H1 (cell line): ENCODE measurements at regions of chr4 and their contacts with region 1.

Region 1: GRCh38 chr4:153750197-153750817 is 9.5 kb downstream of the RNF175 start:
- DNase-seq: peak in 1 of 2 experiments; percentile 80
- H3K4me3 ChIP-seq: no peak overlapping the region
- H3K27ac ChIP-seq: no peak overlapping the region
- H3K4me1 ChIP-seq: no peaks in the 10 kb centered on the region
- H3K27me3 ChIP-seq: no peaks in the 10 kb centered on the region
- CTCF ChIP-seq: peak in 2 of 3 experiments; percentile 81 to 83; a peak in 3 of 4 replicates
- EP300 ChIP-seq: no peak
- POLR2A ChIP-seq: no peak
- RAD21 ChIP-seq: peak; percentile 85 to 94

Region 2: GRCh38 chr4:153398713-153399112 is 351.6 kb before region 1 on chr4:
- CTCF ChIA-PET with region 1: no interaction called
- POLR2A ChIA-PET with region 1: no interaction called
- DNase-seq: no peak
- H3K4me3 ChIP-seq: no peak overlapping the region
- H3K27ac ChIP-seq: no peak overlapping the region
- H3K4me1 ChIP-seq: no peaks in the 10 kb centered on the region
- H3K27me3 ChIP-seq: no peaks in the 10 kb centered on the region
- CTCF ChIP-seq: no peak
- EP300 ChIP-seq: no peak
- POLR2A ChIP-seq: no peak
- RAD21 ChIP-seq: no peak

Region 3: DNA sequence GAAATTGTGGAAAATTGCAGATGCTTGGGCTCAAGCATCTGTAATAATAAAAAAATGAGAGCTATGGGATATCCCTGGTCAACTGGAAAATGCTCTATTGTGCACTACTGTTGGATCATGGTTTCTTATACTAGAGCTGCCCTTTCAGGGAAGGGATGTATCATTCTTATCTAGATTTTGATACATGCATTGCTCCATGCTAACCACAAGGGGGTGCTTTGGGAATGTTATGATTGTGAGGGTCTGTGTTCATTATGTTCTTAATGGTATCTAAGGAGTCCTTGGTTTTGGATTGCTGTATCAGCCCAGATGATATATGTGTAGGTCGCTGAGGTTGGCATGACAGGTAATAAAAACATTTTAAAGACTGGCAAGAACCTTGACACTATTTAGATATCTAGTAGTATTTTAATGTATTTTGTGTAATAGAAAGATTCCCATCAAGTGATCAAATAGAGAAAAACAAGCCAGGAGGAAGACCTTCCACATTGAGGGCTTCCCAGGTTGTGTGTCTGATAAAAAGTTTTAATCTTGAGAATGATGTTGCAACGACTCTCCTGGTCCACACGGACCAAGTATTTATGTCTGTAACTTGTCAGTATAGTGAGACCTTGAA is 115.5 kb before region 1 on chr4:
- CTCF ChIA-PET with region 1: interaction called, 42 read pairs
- POLR2A ChIA-PET with region 1: interaction called, 3 read pairs
- DNase-seq: no peak
- H3K4me3 ChIP-seq: no peak overlapping the region
- H3K27ac ChIP-seq: no peak overlapping the region
- H3K4me1 ChIP-seq: peaks cover 0 to under 1% (median 0%) of the 10 kb centered on the region in 4 experiments; a peak in 1 of 7 replicates
- H3K27me3 ChIP-seq: no peaks in the 10 kb centered on the region
- CTCF ChIP-seq: peak in 2 of 3 experiments; percentile 55 to 78; a peak in 3 of 4 replicates
- EP300 ChIP-seq: no peak
- POLR2A ChIP-seq: no peak
- RAD21 ChIP-seq: peak; percentile 63 to 64

Region 4: DNA sequence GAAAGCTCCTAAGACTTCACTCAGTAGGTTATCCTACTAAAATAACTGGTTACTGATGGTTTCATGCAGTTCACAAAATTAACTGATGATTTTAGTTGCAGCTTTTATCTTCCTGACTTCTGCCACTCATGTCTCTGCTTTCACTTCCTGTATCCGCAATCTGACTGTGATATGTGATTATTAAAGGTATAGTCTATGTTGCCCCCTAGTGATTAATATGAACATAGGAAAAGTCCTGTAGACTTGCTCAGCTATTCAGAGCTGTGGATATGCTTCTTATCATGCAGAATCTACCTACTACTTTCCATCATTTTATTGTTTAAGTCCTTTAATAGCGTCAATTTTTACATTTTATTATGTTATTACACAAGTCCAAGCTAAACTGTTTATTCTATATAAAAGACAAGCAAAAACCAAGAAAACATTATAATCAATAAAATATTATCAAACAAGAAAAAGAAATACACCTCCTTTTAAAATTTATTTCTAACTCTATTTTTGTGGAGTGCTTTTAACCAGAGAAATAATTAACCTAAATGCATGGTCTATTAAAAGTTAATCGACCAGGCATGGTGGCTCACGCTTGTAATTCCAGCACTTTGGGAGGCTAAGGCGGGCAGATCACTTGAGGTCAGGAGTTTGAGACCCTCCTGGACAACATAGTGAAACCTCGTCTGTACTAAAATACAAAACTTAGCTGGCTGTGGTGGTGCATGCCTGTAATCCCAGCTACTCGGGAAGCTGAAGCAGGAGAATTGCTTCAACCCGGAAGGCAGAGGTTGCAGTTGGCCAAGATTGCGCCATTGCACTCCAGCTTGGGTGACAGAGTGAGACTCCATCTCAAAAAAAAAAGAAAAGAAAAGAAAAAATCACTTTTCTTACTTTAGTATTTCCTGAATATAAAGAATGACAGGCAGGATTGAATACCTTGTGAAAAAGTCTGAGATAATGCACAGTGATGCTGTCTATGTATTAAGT is 106.6 kb before region 1 on chr4:
- CTCF ChIA-PET with region 1: interaction called, 37 read pairs
- POLR2A ChIA-PET with region 1: no interaction called
- DNase-seq: no peak
- H3K4me3 ChIP-seq: no peak overlapping the region
- H3K27ac ChIP-seq: no peak overlapping the region
- H3K4me1 ChIP-seq: peaks cover 0 to 7% (median 0%) of the 10 kb centered on the region in 4 experiments; a peak in 3 of 7 replicates
- H3K27me3 ChIP-seq: no peaks in the 10 kb centered on the region
- CTCF ChIP-seq: peak in 1 of 3 experiments; percentile 23; a peak in 2 of 4 replicates
- EP300 ChIP-seq: no peak
- POLR2A ChIP-seq: no peak
- RAD21 ChIP-seq: peak; percentile 50 to 52

Region 5: DNA sequence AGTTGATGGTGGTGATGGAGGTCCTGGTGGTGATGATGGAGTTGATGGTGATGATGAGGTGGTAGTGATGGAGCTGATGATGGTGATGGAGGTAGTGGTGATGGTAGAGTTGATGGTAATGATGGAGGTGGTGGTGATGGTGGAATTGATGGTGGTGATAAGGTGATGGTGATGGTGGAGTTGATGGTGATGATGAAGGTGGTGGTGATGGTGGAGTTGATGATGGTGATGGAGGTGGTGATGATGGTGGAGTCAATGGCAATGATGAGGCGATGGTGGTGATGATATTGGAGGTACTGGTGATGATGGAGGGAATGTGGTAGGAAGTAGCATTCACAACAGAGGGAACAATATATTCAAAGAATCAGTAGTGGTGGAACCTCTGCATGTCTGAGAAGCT is 87.2 kb before region 1 on chr4:
- CTCF ChIA-PET with region 1: no interaction called
- POLR2A ChIA-PET with region 1: no interaction called
- DNase-seq: no peak
- H3K4me3 ChIP-seq: no peak overlapping the region
- H3K27ac ChIP-seq: no peak overlapping the region
- H3K4me1 ChIP-seq: no peaks in the 10 kb centered on the region
- H3K27me3 ChIP-seq: no peaks in the 10 kb centered on the region
- CTCF ChIP-seq: no peak
- EP300 ChIP-seq: no peak
- POLR2A ChIP-seq: no peak
- RAD21 ChIP-seq: no peak

Region 6: GRCh38 chr4:153725136-153725830 is 25.0 kb before region 1 on chr4:
- CTCF ChIA-PET with region 1: interaction called, 11 read pairs
- POLR2A ChIA-PET with region 1: no interaction called
- DNase-seq: no peak
- H3K4me3 ChIP-seq: no peak overlapping the region
- H3K27ac ChIP-seq: no peak overlapping the region
- H3K4me1 ChIP-seq: no peaks in the 10 kb centered on the region
- H3K27me3 ChIP-seq: no peaks in the 10 kb centered on the region
- CTCF ChIP-seq: no peak
- EP300 ChIP-seq: no peak
- POLR2A ChIP-seq: no peak
- RAD21 ChIP-seq: no peak

Region 7: GRCh38 chr4:153733751-153734448 is 16.4 kb before region 1 on chr4:
- CTCF ChIA-PET with region 1: interaction called, 12 read pairs
- POLR2A ChIA-PET with region 1: no interaction called
- DNase-seq: no peak
- H3K4me3 ChIP-seq: no peak overlapping the region
- H3K27ac ChIP-seq: no peak overlapping the region
- H3K4me1 ChIP-seq: no peaks in the 10 kb centered on the region
- H3K27me3 ChIP-seq: no peaks in the 10 kb centered on the region
- CTCF ChIP-seq: no peak
- EP300 ChIP-seq: no peak
- POLR2A ChIP-seq: no peak
- RAD21 ChIP-seq: no peak

Region 8: DNA sequence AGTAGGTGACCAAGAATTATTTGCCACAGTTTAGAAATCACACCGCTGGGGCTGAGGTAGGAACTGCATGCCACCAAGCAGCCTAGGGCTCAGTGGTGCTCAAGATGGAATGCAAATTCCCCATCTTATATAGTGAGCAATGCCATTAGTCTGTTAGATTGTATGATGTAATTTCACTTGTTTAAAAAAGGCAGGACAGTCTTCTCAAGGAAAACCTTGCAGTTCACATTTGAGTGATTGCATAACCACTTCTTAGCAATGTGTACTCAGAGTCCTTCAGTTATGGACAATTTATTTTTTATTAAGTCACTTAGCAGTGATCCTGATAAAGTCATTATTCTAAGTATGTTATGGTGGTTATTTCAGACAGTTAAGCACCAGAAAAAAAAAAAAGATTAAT is 181.5 kb after region 1 on chr4:
- CTCF ChIA-PET with region 1: no interaction called
- POLR2A ChIA-PET with region 1: no interaction called
- DNase-seq: no peak
- H3K4me3 ChIP-seq: no peak overlapping the region
- H3K27ac ChIP-seq: no peak overlapping the region
- H3K4me1 ChIP-seq: peaks cover 0 to 2% (median under 1%) of the 10 kb centered on the region in 4 experiments; a peak in 1 of 7 replicates
- H3K27me3 ChIP-seq: no peaks in the 10 kb centered on the region
- CTCF ChIP-seq: no peak
- EP300 ChIP-seq: no peak
- POLR2A ChIP-seq: no peak
- RAD21 ChIP-seq: no peak